Thyroid gland (tissue), 4 donors: ENCODE measurements at regions of chr4 and their contacts with region 1.

Region 1: GRCh38 chr4:77959566-77960338 is 97.1 kb downstream of the MRPL1 start:
- DNase-seq: no peak
- H3K4me3 ChIP-seq: no peak overlapping the region
- H3K27ac ChIP-seq: no peak overlapping the region
- H3K4me1 ChIP-seq: no peaks in the 10 kb centered on the region
- H3K27me3 ChIP-seq: no peaks in the 10 kb centered on the region
- CTCF ChIP-seq: peak in 5 of 6 experiments; percentile 32 to 83 (median 69)
- POLR2A ChIP-seq: no peak

Region 2: GRCh38 chr4:78517050-78517652 is 557.4 kb after region 1 on chr4:
- intact Hi-C with region 1: loop called (anchors 10 kb)
- DNase-seq: no peak
- H3K4me3 ChIP-seq: no peak overlapping the region
- H3K27ac ChIP-seq: peak overlapping the region in 1 of 3 donors; percentile 18
- H3K4me1 ChIP-seq: peaks cover 3 to 5% of the 10 kb centered on the region in 2 donors
- H3K27me3 ChIP-seq: no peaks in the 10 kb centered on the region
- CTCF ChIP-seq: peak in 4 of 6 experiments; percentile 36 to 71 (median 66)
- POLR2A ChIP-seq: no peak